ENCODE measurements at regions of chr7 and their contacts with region 1.

Region 1: GRCh38 chr7:135274495-135275268 is 41.0 kb downstream of the STRA8 start:
- DNase-seq: peak; percentile 84
- H3K4me3 Mint-ChIP-seq: no peak overlapping the region
- H3K27ac Mint-ChIP-seq: no peak overlapping the region
- H3K4me1 Mint-ChIP-seq: no peaks in the 10 kb centered on the region
- H3K27me3 Mint-ChIP-seq: no peaks in the 10 kb centered on the region

Region 2: GRCh38 chr7:135236727-135237126 is 38.0 kb before region 1 on chr7:
- CTCF ChIA-PET with region 1: interaction called, 12 read pairs
- POLR2A ChIA-PET with region 1: no interaction called
- intact Hi-C with region 1: no loop called
- DNase-seq: no peak
- H3K4me3 Mint-ChIP-seq: no peak overlapping the region
- H3K27ac Mint-ChIP-seq: no peak overlapping the region
- H3K4me1 Mint-ChIP-seq: peaks cover 5% of the 10 kb centered on the region
- H3K27me3 Mint-ChIP-seq: peaks cover 2% of the 10 kb centered on the region

Region 3: DNA sequence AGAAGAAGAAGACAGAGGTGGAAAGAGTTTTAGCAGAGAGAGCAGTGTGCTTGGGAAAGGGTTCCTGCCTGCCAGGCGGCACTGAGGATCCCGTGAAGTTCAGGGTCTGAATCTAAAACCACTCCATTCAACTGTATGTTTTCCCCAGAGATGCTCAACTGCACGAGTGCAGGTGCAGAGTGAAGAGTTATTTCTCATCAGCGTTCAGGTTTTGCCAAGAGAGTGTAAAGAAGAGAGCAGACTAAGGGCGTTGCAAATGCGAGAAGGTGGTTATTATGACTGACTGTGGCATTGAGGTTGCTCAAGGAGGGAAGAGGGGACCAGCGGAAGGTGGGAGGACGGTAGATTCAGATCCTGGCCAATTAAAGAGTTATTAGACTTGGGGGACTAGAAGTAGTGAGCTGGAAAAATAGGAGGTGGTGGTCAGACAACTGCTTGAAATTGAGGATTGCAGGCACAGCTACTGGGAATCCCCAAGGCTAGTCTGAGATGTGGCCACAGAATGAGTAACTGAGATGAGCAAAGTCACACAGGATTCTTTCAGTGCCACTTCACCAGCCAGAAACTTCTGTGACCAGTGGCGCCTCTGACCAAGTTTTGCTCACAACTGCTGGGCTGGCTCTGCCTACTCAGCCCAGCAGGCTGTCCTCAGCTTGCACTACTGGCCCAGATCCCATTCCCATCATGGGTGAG is 11.9 kb before region 1 on chr7:
- CTCF ChIA-PET with region 1: interaction called, 20 read pairs
- POLR2A ChIA-PET with region 1: no interaction called
- intact Hi-C with region 1: no loop called
- DNase-seq: no peak
- H3K4me3 Mint-ChIP-seq: no peak overlapping the region
- H3K27ac Mint-ChIP-seq: no peak overlapping the region
- H3K4me1 Mint-ChIP-seq: no peaks in the 10 kb centered on the region
- H3K27me3 Mint-ChIP-seq: peaks cover 6% of the 10 kb centered on the region

Region 4: GRCh38 chr7:135335628-135336139 is 61.0 kb after region 1 on chr7:
- CTCF ChIA-PET with region 1: interaction called, 84 read pairs
- POLR2A ChIA-PET with region 1: no interaction called
- intact Hi-C with region 1: no loop called
- DNase-seq: peak; percentile 61
- H3K4me3 Mint-ChIP-seq: no peak overlapping the region
- H3K27ac Mint-ChIP-seq: no peak overlapping the region
- H3K4me1 Mint-ChIP-seq: no peaks in the 10 kb centered on the region
- H3K27me3 Mint-ChIP-seq: no peaks in the 10 kb centered on the region

Region 5: DNA sequence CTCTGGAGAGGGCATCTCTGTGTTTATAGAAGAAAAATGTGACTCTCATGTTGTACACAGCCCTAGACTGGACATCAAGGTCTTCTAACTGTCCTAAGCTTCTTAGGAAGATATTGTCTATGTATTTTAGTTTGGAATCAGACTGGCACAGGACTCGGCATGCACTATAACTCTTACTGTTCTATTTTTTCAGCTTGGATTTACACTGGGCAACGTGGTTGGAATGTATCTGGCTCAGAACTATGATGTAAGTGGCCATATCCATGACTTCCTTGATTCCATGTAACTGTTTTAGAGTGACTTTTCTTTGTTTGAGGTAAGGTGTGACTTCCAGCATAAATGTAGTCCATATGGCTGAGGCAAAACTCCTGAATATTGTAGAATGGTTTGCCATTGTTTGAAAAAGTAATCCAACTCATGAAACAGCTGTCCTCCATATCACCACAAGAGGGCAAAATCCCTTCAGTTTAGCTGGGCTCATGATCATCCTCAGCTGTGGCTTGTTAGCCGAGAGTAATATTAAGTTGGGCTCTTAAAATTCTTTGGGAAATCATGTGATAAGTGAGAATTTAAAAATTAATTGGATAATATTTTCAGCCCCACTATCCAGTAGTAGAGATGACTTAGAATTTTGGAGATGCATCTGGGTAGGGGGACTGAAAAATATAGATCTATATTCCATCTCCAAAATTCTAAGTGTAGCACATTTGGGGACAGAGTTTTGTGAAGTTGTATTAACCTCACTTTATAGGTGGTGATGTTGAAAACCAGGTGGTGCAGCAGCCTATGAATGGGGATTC is 398.1 kb after region 1 on chr7:
- CTCF ChIA-PET with region 1: interaction called, 12 read pairs
- POLR2A ChIA-PET with region 1: no interaction called
- intact Hi-C with region 1: no loop called
- DNase-seq: no peak
- H3K4me3 Mint-ChIP-seq: no peak overlapping the region
- H3K27ac Mint-ChIP-seq: no peak overlapping the region
- H3K4me1 Mint-ChIP-seq: peaks cover 25% of the 10 kb centered on the region
- H3K27me3 Mint-ChIP-seq: no peaks in the 10 kb centered on the region

Measured in activated CD4-positive, alpha-beta memory T cell treated with anti-CD3 and anti-CD28 coated beads for 36 hours (primary cell).